ENCODE measurements at regions of chr5 and their contacts with region 1.

Region 1: DNA sequence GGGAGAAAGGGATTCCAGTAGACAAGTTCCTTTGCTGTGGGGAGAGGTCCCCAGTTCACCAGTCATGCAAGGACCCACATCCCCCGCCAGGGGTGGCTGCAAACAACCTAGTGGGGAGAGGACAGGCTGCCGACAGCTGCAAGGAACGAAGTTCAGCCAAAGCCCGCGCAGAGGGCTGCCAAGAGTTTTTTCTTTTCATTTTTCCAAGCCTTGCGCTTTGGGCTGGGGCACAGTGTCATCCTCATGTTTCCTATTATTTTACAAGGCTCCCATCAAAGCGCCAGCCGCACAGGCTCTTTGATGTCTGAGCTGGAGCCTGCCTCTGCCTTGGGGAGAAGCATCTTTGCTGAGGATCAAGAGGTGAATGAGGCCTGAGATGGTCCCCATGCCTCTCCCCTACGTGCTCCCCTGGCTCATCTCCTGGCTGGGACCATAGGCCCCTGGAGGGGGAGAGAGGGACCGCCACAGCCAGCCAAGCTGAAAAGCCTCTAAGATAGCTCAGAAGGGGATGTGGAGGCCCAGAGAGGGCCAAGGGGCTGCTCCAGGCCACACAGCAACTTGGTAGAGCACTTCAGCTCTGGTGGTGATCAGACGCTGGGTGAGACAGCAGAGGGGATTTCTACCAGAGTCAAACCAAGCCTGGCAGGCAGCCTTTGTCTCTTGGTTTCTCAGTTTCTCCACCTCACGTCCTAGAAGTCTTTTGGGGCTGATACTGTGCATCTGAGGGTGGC is 50.4 kb upstream of the SYNPO start:
- DNase-seq: peak in 4 of 5 donors; percentile 73 to 94 (median 86)
- H3K4me3 ChIP-seq: no peak overlapping the region
- H3K27ac ChIP-seq: peak overlapping the region; percentile 54
- H3K4me1 ChIP-seq: peaks cover 0 to 24% (median 8%) of the 10 kb centered on the region in 3 donors
- H3K27me3 ChIP-seq: no peaks in the 10 kb centered on the region
- CTCF ChIP-seq: peak; percentile 56

Region 2: DNA sequence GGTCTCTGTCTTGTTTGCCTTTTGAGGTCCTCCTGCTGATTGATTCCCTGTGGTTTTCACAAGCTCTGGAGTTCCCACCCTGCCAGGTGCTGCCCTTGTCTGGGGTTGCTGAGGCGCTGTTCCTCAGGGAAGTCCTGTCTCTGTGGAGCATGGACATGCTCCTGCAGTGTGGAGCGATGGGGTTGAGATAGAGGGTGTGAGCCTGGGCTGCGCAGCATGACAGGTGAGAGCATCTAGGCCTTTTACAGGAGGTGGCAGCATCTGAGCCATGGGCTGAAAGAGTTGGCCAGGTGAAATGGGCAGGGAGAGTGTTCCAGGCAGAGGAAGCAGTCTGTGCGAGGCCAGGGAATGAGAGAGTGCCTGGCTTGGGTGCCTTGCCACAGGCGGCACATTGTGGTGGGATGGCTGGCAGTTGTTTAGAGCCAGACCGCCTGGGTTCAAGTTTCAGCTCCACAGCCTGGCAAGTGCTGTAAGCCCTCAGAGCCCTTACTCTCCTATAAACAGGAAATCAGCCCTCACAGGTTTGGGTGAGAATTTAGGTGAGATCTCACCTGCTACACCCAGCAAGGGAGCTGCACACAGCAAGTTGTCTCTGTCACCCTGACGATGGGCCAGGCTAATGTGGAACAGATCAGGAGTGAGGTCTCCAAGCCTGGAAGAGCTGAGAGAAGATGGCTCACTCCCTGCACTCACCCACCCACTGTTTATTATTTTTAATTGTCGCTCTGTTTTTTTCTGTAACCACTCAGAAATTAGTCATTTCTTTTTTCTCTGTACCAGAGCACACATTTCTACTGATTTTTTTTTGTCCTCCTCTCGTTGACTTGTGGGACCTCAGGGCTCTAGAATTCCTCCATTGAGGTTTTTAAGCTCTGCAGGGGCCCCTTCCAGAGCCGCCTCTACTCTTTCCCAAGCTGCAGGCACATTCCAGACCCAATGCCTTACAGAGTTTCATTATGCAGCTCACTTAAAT is 213.0 kb before region 1 on chr5:
- intact Hi-C with region 1: no loop called
- DNase-seq: no peak
- H3K4me3 ChIP-seq: no peak overlapping the region
- H3K27ac ChIP-seq: no peak overlapping the region
- H3K4me1 ChIP-seq: no peaks in the 10 kb centered on the region
- H3K27me3 ChIP-seq: no peaks in the 10 kb centered on the region
- CTCF ChIP-seq: no peak

Region 3: GRCh38 chr5:150656191-150657132 is 66.4 kb after region 1 on chr5:
- intact Hi-C with region 1: loop called (anchors 10 kb)
- DNase-seq: peak; percentile 86 to 94 (median 93)
- H3K4me3 ChIP-seq: peak overlapping the region in 2 of 3 donors; percentile 34 to 49
- H3K27ac ChIP-seq: no peak overlapping the region
- H3K4me1 ChIP-seq: peaks cover 0 to 14% (median 5%) of the 10 kb centered on the region in 3 donors
- H3K27me3 ChIP-seq: no peaks in the 10 kb centered on the region
- CTCF ChIP-seq: peak; percentile 75

Measured in kidney (tissue), 22 donors.